Vagina (tissue), 2 donors: ENCODE measurements at regions of chr12 and their contacts with region 1.

Region 1: GRCh38 chr12:1932264-1932777 is 13.9 kb upstream of the CACNA2D4 start:
- DNase-seq: peak in 1 of 2 donors; percentile 46
- H3K4me3 ChIP-seq: no peak overlapping the region
- H3K27ac ChIP-seq: no peak overlapping the region
- H3K4me1 ChIP-seq: peaks cover 27% of the 10 kb centered on the region
- H3K27me3 ChIP-seq: no peaks in the 10 kb centered on the region
- CTCF ChIP-seq: no peak
- POLR2A ChIP-seq: no peak

Region 2: GRCh38 chr12:1804545-1805332 is 127.6 kb before region 1 on chr12:
- intact Hi-C with region 1: loop called (anchors 5 kb)
- DNase-seq: no peak
- H3K4me3 ChIP-seq: no peak overlapping the region
- H3K27ac ChIP-seq: no peak overlapping the region
- H3K4me1 ChIP-seq: no peaks in the 10 kb centered on the region
- H3K27me3 ChIP-seq: no peaks in the 10 kb centered on the region
- CTCF ChIP-seq: no peak
- POLR2A ChIP-seq: no peak

Region 3: GRCh38 chr12:1859643-1860042 is 72.7 kb before region 1 on chr12:
- intact Hi-C with region 1: no loop called
- DNase-seq: no peak
- H3K4me3 ChIP-seq: no peak overlapping the region
- H3K27ac ChIP-seq: no peak overlapping the region
- H3K4me1 ChIP-seq: no peaks in the 10 kb centered on the region
- H3K27me3 ChIP-seq: no peaks in the 10 kb centered on the region
- CTCF ChIP-seq: no peak
- POLR2A ChIP-seq: no peak

Region 4: DNA sequence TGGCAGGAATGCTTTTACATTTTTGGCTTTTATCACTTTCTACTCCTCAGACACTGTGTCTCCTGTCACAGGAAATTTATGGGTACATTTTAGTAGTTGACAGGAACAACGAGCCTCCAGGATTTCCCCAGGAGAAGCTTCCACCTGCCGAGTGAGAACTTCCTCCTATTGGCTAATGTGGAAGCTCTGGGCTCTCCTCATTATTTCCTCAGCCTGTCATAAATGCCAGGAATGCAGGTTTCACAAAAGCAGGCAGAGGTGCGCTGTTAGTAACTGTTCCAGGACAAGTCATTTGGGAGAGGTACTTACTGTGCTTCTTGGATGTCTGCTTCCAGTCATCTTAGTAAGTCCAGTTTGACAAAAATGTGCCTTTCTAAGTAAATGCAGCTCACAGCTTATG is 91.0 kb after region 1 on chr12:
- intact Hi-C with region 1: no loop called
- DNase-seq: no peak
- H3K4me3 ChIP-seq: no peak overlapping the region
- H3K27ac ChIP-seq: no peak overlapping the region
- H3K4me1 ChIP-seq: no peaks in the 10 kb centered on the region
- H3K27me3 ChIP-seq: no peaks in the 10 kb centered on the region
- CTCF ChIP-seq: no peak
- POLR2A ChIP-seq: no peak

Region 5: GRCh38 chr12:2154050-2154449 is 221.7 kb after region 1 on chr12:
- intact Hi-C with region 1: no loop called
- DNase-seq: no peak
- H3K4me3 ChIP-seq: no peak overlapping the region
- H3K27ac ChIP-seq: peak overlapping the region; percentile 70
- H3K4me1 ChIP-seq: peaks cover 20% of the 10 kb centered on the region
- H3K27me3 ChIP-seq: no peaks in the 10 kb centered on the region
- CTCF ChIP-seq: no peak
- POLR2A ChIP-seq: no peak